ENCODE measurements at regions of chr12 and their contacts with region 1.

Region 1: DNA sequence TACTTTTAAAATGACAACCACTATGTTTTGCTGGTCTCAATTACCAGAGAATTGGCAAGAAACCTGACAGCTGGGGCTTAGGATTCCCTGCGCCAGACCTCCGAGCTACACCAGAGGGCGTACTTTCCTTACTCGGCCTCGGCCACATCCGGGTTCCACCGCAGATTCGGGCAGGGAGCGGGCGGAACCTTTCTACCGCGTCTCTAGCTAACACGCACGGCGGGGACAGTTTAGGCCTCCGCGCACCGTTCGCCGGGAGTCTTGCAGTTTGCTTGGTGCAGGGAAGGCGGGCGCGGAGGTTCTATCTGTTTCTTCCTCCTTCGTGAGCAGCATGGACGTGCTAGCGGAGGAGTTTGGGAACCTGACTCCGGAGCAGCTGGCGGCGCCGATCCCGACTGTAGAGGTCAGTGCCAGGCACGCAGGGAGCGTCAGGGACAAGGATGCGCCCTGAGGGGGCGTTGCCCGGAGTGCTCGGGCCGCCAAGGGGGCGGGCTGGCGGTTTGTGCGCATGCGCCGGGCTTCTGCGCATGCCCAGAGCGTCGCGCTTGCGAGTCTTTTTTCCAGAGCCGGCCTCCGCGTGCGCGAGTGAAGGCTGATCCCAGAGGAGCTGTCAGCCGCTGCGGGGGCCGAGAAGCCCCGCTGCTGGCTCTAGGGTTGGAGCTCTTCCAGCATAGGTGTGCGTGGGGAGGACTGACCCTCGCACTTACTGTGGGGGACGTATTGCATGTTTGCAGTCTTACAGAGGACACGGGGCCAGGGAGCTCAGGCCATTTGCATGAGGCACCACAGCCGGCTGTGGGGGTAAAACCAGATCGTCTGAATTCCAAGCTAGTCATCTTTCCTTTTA is at the start of gene POLR3B:
- DNase-seq: peak; percentile 95

Region 2: DNA sequence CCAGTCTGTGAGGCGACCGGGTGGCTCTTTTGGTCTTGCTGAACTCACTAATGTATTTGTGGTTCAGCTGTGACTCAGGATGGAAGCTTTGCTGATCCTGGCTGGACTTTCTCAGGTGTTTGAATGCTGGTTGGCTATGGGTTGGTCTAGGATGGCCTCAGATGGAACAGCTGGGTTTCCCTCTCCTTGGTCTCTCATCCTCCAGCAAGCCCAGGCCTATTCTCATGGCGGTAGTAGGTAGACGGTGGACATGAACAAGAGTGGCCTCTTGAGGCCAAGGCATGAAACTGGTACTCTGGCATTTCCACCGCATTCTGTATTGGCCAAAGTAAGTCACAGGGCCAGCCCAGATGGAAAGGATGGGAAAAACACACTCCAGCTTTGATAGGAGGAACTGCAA is 12.0 kb before region 1 on chr12:
- CTCF ChIA-PET with region 1: interaction called, 6 read pairs
- POLR2A ChIA-PET with region 1: interaction called, 11 read pairs
- DNase-seq: peak; percentile 21

Region 3: DNA sequence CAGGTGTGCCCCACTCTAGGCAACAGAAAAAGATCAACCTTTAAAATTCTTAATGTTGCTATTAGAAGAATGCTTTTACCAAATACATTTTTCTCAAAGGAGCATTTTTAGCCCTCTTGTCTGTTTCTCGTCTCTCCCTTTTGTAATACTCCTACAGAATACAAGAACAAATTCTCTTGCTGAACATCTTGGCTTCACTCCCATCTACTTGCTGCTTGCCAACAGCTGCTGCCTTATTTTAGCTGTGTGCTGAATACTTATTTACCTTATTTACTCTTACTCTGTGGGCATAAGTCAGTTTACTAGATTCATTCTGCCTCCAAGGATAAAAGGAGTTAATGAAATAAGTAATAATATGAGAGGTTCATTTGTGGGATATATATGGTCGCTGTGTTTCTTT is 70.6 kb after region 1 on chr12:
- CTCF ChIA-PET with region 1: no interaction called
- POLR2A ChIA-PET with region 1: no interaction called
- DNase-seq: no peak

Region 4: GRCh38 chr12:106919910-106920544 is 562.3 kb after region 1 on chr12:
- CTCF ChIA-PET with region 1: interaction called, 12 read pairs
- POLR2A ChIA-PET with region 1: interaction called, 3 read pairs
- DNase-seq: peak; percentile 53

Region 5: GRCh38 chr12:106986625-106987430 is 629.1 kb after region 1 on chr12 and contains the start of gene MTERF2:
- CTCF ChIA-PET with region 1: no interaction called
- POLR2A ChIA-PET with region 1: interaction called, 10 read pairs
- DNase-seq: peak; percentile 96

Measured in HEK293T (cell line).